Pancreas (tissue), 10 donors: ENCODE measurements at regions of chr7 and their contacts with region 1.

Region 1: DNA sequence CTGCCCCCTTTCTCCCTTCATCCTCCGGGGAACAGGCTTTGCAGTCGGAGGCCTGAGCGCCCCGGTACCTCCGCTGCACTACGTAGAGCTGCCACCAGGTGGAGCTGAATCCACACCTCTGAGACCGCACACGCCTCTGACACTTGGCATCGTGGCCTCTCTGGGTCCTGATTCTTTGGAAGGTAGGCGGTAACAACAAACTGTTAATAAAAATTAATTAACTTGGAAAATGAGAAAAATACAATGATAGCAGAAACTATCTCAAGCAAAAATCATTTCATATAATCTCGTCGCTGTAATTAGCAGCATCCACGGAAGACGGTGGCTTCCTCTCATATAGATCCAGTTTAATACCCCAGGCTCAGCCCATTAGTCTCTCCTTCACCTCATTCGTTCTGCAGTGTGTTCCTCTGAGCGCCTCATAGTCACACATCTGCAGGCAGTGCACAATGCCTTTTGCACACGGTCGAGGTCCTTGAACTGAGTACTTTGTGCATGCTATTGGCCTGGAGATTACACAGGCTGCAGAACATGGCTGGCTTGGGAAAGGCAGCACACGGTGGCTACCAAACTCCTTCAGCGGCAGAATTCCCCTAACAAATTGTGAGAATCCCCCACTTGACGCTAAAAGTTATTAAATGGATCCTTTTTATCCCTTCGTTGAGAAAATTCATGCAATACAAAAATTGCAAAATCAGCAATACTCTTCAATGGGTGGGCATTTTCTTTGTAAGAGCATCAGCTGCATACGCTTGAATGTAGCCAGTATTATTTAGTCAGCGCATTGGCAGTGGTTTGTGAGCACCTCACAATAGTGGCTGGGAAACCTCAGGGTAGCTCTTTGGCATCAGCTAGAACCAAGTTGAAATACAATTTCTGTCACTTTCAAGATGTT is 18.7 kb downstream of the OR9A2 start:
- DNase-seq: peak; percentile 59 to 94 (median 85)
- ATAC-seq: peak; percentile 85 to 97 (median 96)
- H3K4me3 ChIP-seq: no peak overlapping the region
- H3K27ac ChIP-seq: no peak overlapping the region
- H3K4me1 ChIP-seq: no peaks in the 10 kb centered on the region
- H3K27me3 ChIP-seq: no peaks in the 10 kb centered on the region
- CTCF ChIP-seq: peak; percentile 87 to 95 (median 94)

Region 2: GRCh38 chr7:142832417-142832816 is 175.8 kb before region 1 on chr7:
- intact Hi-C with region 1: no loop called
- DNase-seq: no peak
- ATAC-seq: no peak
- H3K4me3 ChIP-seq: no peak overlapping the region
- H3K27ac ChIP-seq: no peak overlapping the region
- H3K4me1 ChIP-seq: no peaks in the 10 kb centered on the region
- H3K27me3 ChIP-seq: no peaks in the 10 kb centered on the region
- CTCF ChIP-seq: no peak

Region 3: GRCh38 chr7:142873281-142873787 is 134.9 kb before region 1 on chr7:
- intact Hi-C with region 1: loop called in 2 of 3 experiments (anchors 5 to 10 kb)
- DNase-seq: peak in 1 of 6 donors; percentile 63
- ATAC-seq: peak; percentile 33 to 67 (median 47)
- H3K4me3 ChIP-seq: no peak overlapping the region
- H3K27ac ChIP-seq: no peak overlapping the region
- H3K4me1 ChIP-seq: no peaks in the 10 kb centered on the region
- H3K27me3 ChIP-seq: no peaks in the 10 kb centered on the region
- CTCF ChIP-seq: peak; percentile 10 to 29 (median 26)